ENCODE measurements at regions of chr2 and their contacts with region 1.

Region 1: GRCh38 chr2:121095257-121096080 is 189.5 kb downstream of the TFCP2L1 start:
- DNase-seq: no peak

Region 2: GRCh38 chr2:121297217-121297830 is 201.9 kb after region 1 on chr2:
- intact Hi-C with region 1: loop called (anchors 10 kb)
- DNase-seq: peak; percentile 72

Region 3: GRCh38 chr2:121355488-121355887 is 260.0 kb after region 1 on chr2:
- intact Hi-C with region 1: loop called (anchors 2 kb)
- DNase-seq: no peak